MCF 10A (cell line): ENCODE measurements at regions of chr9 and their contacts with region 1.

Region 1: DNA sequence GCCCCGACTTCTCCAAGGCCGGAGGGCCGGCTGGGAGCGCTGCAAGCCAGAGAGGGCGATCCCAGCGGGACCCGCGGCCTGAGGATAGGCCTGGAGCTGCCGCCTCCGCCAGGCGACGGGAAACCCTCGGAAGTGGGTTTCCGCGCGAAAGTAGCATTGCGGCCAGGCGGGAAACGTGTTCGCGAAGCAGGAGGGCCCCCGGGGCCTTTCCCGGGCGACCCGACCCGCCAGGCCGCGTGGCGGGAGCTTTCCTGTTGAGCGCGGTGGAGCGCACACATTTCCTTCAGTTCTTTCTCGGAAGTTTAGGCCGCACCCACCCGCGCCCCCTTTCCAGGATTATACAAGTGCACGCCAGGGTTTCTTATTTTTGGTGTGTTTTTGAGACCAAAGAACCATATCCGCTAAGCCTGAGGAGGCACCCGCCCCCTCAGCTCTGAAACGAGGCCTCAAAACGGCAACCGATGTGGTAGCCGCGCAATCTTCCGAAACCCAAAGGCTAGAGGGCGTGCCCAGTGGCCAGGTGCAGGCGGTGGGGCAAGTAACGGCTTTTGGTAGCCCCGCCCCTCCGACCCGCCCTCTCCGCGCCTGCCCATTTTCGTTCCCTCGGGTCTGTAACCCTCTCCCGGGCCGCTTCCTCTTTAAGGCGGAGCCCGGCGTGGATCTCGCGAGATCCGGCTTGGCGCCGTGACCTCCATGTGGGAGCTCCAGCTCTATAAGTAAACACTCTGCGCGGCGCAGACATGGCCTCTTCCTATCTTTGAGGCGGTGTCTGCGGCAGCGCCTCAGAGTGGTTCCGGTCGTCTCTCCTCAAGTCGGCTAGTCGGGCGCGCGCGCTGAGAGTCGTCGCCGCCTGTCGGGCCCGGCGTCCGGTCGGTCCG is at the start of gene UHRF2:
- DNase-seq: peak; percentile 98
- H3K4me3 Mint-ChIP-seq: peak within 1 kb of the TSS; percentile 81
- H3K27ac Mint-ChIP-seq: peak within 1 kb of the TSS; percentile 87
- H3K4me1 Mint-ChIP-seq: peaks cover 19% of the 10 kb centered on the region
- H3K27me3 Mint-ChIP-seq: no peaks in the 10 kb centered on the region
- CTCF ChIP-seq: no peak
- total RNA-seq, gene UHRF2: 54.6 and 58.3 TPM in 2 replicates

Region 2: DNA sequence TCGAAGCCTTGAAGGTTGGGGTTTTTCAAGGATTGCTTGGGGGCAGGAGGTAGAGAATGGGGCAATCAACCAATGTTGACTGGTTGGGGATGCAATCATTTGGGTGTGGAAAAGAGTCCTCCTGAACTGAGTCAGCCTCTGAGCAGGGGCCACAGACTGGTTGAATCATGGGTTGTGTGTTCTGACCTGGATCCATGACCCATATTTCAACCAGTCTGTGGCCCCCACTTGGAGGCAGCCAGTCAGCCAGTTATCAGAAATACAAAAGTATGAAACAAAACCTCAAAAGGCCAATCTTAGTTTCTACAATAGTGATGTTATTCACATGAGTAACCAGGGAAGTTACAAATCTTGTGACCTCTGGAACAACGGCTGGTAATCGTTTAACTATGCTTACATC is 315.9 kb before region 1 on chr9:
- CTCF ChIA-PET with region 1: no interaction called
- POLR2A ChIA-PET with region 1: no interaction called
- intact Hi-C with region 1: no loop called
- DNase-seq: peak; percentile 42
- H3K4me3 Mint-ChIP-seq: no peak overlapping the region
- H3K27ac Mint-ChIP-seq: no peak overlapping the region
- H3K4me1 Mint-ChIP-seq: peaks cover 12% of the 10 kb centered on the region
- H3K27me3 Mint-ChIP-seq: no peaks in the 10 kb centered on the region
- CTCF ChIP-seq: no peak

Region 3: GRCh38 chr9:6328103-6328502 is 84.6 kb before region 1 on chr9 and contains the start of gene TPD52L3:
- CTCF ChIA-PET with region 1: no interaction called
- POLR2A ChIA-PET with region 1: no interaction called
- intact Hi-C with region 1: no loop called
- DNase-seq: no peak
- H3K4me3 Mint-ChIP-seq: no peak within 1 kb of the TSS
- H3K27ac Mint-ChIP-seq: no peak within 1 kb of the TSS
- H3K4me1 Mint-ChIP-seq: no peaks in the 10 kb centered on the region
- H3K27me3 Mint-ChIP-seq: no peaks in the 10 kb centered on the region
- CTCF ChIP-seq: no peak
- total RNA-seq, gene TPD52L3: not detected in 2 replicates

Region 4: DNA sequence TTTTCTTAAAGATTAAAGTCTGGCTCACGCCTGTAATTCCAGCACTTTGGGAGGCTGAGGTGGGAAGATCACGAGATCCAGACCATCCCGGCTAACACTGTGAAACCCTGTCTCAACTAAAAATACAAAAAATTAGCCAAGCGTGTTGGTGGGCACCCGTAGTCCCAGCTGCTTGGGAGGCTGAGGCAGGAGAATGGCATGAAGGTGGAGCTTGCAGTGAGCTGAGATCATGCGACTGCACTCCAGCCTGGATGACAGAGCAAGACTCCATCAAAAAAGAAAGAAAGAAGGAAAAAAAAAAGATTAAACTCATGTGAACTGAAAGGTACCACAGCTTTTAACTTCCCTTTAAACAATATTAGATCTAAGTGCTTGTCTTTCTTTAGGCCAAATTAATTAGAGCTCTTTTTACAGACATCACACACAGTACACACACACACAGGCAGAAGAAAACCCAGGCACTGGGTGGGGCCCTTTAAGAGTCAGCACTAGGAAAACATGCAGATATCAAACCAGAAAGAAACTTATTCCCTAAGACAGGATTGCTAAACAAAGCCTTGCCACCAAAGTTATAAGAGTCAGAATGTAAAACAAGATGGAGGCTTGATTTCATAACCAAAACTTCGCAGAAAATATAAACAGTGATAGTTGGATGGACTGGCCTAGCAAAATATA is 29.0 kb before region 1 on chr9:
- CTCF ChIA-PET with region 1: interaction called, 3 read pairs
- POLR2A ChIA-PET with region 1: interaction called, 31 read pairs
- intact Hi-C with region 1: no loop called
- DNase-seq: peak; percentile 65
- H3K4me3 Mint-ChIP-seq: peak overlapping the region; percentile 52
- H3K27ac Mint-ChIP-seq: peak overlapping the region; percentile 98
- H3K4me1 Mint-ChIP-seq: peaks cover 27% of the 10 kb centered on the region
- H3K27me3 Mint-ChIP-seq: no peaks in the 10 kb centered on the region
- CTCF ChIP-seq: no peak

Region 5: GRCh38 chr9:6428940-6429889 is 16.5 kb after region 1 on chr9:
- CTCF ChIA-PET with region 1: interaction called, 7 read pairs
- POLR2A ChIA-PET with region 1: interaction called, 52 read pairs
- intact Hi-C with region 1: no loop called
- DNase-seq: no peak
- H3K4me3 Mint-ChIP-seq: no peak overlapping the region
- H3K27ac Mint-ChIP-seq: peak overlapping the region; percentile 49
- H3K4me1 Mint-ChIP-seq: peaks cover 44% of the 10 kb centered on the region
- H3K27me3 Mint-ChIP-seq: no peaks in the 10 kb centered on the region
- CTCF ChIP-seq: no peak

Region 6: GRCh38 chr9:6566409-6567139 is 153.8 kb after region 1 on chr9:
- CTCF ChIA-PET with region 1: interaction called, 4 read pairs
- POLR2A ChIA-PET with region 1: interaction called, 30 read pairs
- intact Hi-C with region 1: loop called (anchors 1 kb)
- DNase-seq: peak; percentile 98
- H3K4me3 Mint-ChIP-seq: peak overlapping the region; percentile 64
- H3K27ac Mint-ChIP-seq: peak overlapping the region; percentile 64
- H3K4me1 Mint-ChIP-seq: peaks cover 19% of the 10 kb centered on the region
- H3K27me3 Mint-ChIP-seq: no peaks in the 10 kb centered on the region
- CTCF ChIP-seq: no peak

Region 7: DNA sequence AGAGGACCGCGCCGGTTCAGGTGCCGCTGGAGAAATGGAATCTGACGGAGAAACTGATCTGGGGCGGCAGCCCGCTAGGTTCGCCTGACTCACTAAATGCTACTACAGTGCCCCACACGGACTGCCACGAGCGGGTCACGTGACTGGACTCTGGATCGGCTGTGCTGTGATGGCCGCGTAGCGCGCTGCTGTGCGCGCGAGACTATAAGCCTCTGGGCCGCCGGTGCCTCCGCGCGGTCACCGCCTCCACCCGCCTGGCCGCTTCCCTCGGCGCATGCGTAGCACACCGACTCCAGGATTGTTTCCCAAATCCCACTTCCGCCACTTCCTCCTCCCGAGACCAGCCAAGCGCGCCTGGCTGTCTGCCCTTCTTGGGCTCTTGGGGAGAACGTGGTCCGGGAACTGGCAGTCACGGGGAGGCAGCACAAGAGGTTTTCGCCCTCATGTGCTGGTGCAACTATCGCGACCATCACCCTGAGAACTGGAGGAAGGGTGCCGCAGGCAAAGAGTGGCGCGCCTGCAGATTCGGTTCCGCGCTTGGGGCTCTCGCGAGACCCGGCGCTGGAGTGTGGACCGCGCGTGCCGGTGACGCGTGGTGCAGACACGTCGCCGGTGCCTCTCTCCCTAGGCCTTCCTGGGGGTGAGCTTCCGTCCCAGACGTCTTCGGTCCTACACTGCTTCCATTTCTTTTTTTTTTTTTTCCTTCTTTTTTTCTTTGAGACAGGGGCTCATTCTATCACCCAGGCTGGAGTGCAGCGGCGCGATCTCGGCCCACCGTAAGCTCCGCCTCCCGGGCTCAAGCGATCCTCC is 268.6 kb after region 1 on chr9:
- CTCF ChIA-PET with region 1: interaction called, 4 read pairs
- POLR2A ChIA-PET with region 1: interaction called, 13 read pairs
- intact Hi-C with region 1: loop called (anchors 5 kb)
- DNase-seq: peak; percentile 97
- H3K4me3 Mint-ChIP-seq: peak overlapping the region; percentile 92
- H3K27ac Mint-ChIP-seq: peak overlapping the region; percentile 98
- H3K4me1 Mint-ChIP-seq: peaks cover 15% of the 10 kb centered on the region
- H3K27me3 Mint-ChIP-seq: no peaks in the 10 kb centered on the region
- CTCF ChIP-seq: no peak

Region 8: DNA sequence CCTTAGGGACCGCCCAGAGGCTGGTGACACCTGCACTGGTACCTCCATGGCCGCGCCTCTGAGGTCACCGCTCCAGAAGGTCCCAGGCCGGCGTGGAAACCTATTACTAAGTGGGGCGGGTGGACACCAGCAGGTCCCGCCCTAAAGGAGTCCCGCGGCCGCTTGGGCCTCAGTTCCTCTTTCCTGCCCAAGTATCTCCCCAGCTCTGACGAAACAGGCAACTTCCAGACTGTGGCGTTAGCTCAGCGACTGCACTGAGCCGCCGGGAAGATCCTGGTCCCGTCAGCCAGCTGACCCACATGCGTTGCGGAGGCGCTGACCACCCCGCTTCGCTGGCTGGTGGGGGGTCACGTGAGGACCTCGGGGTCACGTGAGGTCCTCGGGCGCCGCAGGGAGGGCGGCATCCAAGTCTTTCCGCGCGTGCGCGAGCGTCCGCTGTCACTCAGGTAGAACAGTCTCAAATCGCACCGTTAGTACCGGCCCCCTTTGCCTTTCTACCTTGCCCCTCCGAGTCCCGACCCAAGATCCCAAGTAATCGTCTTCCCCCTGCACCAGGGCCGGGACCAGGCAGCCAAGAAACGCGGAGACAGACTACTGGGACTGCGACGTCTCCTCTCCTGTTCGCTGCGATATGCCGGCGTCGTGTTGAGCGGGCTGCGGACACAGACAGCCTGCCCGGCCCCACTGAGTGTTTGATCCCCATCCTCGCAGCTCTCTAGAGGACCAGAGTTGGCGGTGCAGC is 291.3 kb after region 1 on chr9:
- CTCF ChIA-PET with region 1: no interaction called
- POLR2A ChIA-PET with region 1: no interaction called
- intact Hi-C with region 1: no loop called
- DNase-seq: peak; percentile 60
- H3K4me3 Mint-ChIP-seq: peak overlapping the region; percentile 83
- H3K27ac Mint-ChIP-seq: peak overlapping the region; percentile 81
- H3K4me1 Mint-ChIP-seq: no peaks in the 10 kb centered on the region
- H3K27me3 Mint-ChIP-seq: no peaks in the 10 kb centered on the region
- CTCF ChIP-seq: no peak

Region 9: DNA sequence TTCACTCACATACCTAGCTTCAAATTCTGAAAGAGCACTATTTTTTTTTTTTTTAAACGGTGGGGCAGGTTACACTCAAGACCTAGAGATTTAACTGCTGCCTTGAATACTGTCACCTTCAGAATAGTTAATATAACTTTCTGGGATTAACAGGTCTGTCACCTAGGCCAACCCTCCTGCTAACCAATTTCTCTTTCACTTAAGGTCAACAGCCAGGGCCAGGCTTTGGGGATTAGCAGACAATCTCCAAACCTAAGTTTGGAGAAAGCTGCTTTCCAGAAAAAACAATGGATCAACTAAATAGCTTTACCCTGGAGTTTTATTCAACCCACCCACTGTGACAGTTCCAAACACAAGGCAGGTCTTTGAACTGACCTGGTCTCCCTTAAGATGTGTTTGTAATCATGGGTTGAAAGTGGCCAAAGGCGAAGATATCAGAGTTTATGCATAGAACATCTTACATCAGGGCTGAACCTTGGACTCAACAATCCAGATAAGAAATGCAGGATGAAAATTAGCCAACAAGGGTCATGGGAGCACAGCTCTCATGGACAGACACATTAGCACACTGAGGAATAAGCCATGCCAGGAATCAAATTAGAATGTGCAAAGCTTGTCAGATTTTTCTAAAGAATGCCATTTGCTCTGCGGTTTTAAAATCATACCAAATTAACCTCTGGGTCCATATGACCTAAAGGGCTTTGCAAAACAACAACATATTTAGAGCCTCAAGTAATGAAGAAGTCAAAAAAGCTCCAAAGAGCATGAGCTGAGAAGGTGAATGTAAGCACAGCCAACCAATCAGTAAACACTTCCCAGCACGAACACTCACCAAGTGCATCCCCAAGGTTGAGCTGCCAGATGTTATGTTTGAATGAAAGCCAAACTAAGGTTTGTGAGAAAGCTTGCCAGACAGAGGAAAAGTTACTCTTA is 1925.4 kb after region 1 on chr9:
- CTCF ChIA-PET with region 1: no interaction called
- POLR2A ChIA-PET with region 1: no interaction called
- intact Hi-C with region 1: no loop called
- DNase-seq: peak; percentile 22
- H3K4me3 Mint-ChIP-seq: no peak overlapping the region
- H3K27ac Mint-ChIP-seq: no peak overlapping the region
- H3K4me1 Mint-ChIP-seq: no peaks in the 10 kb centered on the region
- H3K27me3 Mint-ChIP-seq: no peaks in the 10 kb centered on the region
- CTCF ChIP-seq: no peak